WTC11 (cell line): ENCODE measurements at regions of chr1 and their contacts with region 1.

Region 1: DNA sequence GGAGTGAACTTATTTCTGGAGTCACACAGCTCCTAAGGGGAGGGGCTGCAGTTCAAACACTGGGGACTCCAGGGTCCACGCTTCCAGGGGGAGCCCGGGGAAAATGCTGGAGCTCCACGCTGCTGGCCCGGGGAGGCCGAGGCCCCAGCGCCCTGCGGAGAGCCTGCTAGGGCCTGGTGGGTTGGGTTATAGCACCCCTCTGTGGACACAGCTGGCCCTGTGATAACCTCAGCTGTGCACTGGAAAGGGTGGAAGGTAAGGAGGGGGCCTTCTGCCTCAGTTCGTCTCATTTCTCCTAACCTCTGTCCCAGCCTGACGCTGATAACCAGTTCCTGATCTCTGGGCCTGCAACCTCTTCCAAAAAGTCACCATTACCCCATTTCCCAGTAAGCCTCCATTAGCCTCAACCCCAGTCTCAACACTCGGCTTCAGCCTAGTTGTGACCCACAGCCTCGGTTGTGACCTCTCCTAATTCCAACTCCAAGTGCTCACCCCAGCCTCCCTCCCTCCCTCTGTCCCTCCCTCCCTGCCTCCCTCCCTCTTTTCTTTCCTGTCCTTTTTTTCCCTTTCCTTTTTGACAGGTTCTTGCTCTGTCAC is 7.1 kb downstream of the NBL1 start:
- DNase-seq: peak; percentile 68
- ATAC-seq: peak; percentile 34
- H3K4me3 Mint-ChIP-seq: no peak overlapping the region
- H3K27ac Mint-ChIP-seq: no peak overlapping the region
- H3K4me1 Mint-ChIP-seq: peaks cover 13% of the 10 kb centered on the region
- H3K27me3 Mint-ChIP-seq: peaks cover 7% of the 10 kb centered on the region
- CTCF ChIP-seq: 0 out of 2 replicates have a peak, but pooled peaks have one; percentile 16

Region 2: GRCh38 chr1:19273106-19273843 is 378.0 kb before region 1 on chr1:
- CTCF ChIA-PET with region 1: interaction called, 15 read pairs
- POLR2A ChIA-PET with region 1: no interaction called
- DNase-seq: no peak
- ATAC-seq: no peak
- H3K4me3 Mint-ChIP-seq: peak overlapping the region; percentile 18; the same call in 1 of the 2 replicates
- H3K27ac Mint-ChIP-seq: no peak overlapping the region
- H3K4me1 Mint-ChIP-seq: no peaks in the 10 kb centered on the region
- H3K27me3 Mint-ChIP-seq: peaks cover 35% of the 10 kb centered on the region
- CTCF ChIP-seq: no peak

Region 3: GRCh38 chr1:19344372-19345230 is 306.6 kb before region 1 on chr1:
- CTCF ChIA-PET with region 1: interaction called, 10 read pairs
- POLR2A ChIA-PET with region 1: no interaction called
- DNase-seq: peak; percentile 81
- ATAC-seq: peak; percentile 74
- H3K4me3 Mint-ChIP-seq: no peak overlapping the region
- H3K27ac Mint-ChIP-seq: peak overlapping the region; percentile 65
- H3K4me1 Mint-ChIP-seq: peaks cover 14% of the 10 kb centered on the region
- H3K27me3 Mint-ChIP-seq: no peaks in the 10 kb centered on the region
- CTCF ChIP-seq: peak; percentile 94

Region 4: DNA sequence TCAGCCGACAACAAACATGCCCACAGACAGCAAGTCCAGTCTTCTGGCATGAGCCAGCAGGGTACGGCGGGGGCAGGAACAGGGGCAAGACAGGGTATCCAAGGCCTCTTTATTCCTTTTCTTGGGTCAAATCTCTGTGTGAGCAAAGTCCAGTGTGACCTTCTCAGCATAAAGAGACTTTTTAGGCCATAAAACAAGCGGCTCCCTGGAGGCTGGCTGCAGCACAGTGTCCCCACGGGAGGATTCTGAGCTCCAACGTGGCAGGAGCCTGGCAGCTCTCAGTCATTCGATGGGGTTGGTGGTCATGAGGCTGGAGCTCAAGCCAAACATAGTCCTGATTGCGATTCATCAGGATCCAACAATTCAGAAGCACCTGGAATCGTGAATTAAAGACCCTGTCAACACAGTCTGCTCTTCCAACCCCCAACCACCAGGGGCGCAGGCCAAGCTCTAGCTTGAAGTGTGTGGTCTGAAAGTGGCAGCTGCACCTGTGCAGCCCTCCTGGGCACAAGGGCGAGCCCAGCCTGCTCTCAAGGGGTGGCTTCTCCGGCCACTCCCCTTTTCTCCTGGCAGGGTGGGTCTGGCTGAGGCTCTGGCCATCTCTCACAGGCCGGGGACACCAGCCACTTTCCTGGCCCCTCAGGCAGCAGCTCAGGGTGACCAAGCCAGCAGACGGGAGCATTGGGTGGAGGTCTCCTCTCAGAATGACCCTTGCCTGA is 277.0 kb before region 1 on chr1:
- CTCF ChIA-PET with region 1: interaction called, 10 read pairs
- POLR2A ChIA-PET with region 1: no interaction called
- DNase-seq: peak; percentile 79
- ATAC-seq: peak; percentile 90
- H3K4me3 Mint-ChIP-seq: no peak overlapping the region
- H3K27ac Mint-ChIP-seq: no peak overlapping the region
- H3K4me1 Mint-ChIP-seq: no peaks in the 10 kb centered on the region
- H3K27me3 Mint-ChIP-seq: no peaks in the 10 kb centered on the region
- CTCF ChIP-seq: peak; percentile 81

Region 5: DNA sequence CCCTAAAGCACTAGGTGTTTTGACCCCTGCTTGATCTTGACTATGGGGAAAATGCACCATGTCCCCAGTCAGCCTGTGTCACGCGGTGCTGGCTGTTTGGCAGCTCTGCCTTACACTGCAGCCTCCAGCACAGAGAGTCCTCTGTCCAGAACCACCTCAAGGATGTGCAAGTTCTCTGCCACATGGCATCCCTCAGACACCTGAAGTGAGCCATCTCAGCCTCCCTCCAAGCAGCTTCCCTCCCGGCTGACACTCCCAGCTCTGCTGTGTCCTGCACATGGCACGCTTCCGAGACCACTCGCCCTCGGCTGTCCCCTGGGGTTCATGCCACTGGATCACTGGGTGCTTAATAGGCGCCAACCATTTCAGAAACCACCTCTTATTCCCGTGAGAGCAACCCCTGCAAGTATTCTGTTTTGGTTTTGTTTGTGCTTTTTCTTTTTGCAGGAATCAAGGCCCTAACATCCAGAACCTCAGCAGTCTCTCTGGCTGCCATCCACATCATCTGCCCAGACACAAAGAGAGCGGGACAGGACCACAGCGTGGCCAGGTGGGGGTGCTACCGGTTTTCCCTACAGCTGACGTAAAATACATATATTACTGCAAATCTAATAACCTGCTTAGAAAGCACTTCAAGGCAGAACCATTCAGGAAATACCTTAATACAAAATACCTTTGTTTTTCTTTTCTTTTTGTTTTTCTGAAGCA is 211.6 kb before region 1 on chr1:
- CTCF ChIA-PET with region 1: interaction called, 22 read pairs
- POLR2A ChIA-PET with region 1: no interaction called
- DNase-seq: peak; percentile 54
- ATAC-seq: peak; percentile 74
- H3K4me3 Mint-ChIP-seq: no peak overlapping the region
- H3K27ac Mint-ChIP-seq: peak overlapping the region; percentile 70
- H3K4me1 Mint-ChIP-seq: peaks cover 39% of the 10 kb centered on the region
- H3K27me3 Mint-ChIP-seq: no peaks in the 10 kb centered on the region
- CTCF ChIP-seq: no peak

Region 6: GRCh38 chr1:19661721-19662228 is 10.5 kb after region 1 on chr1:
- CTCF ChIA-PET with region 1: interaction called, 25 read pairs
- POLR2A ChIA-PET with region 1: interaction called, 3 read pairs
- DNase-seq: no peak
- ATAC-seq: no peak
- H3K4me3 Mint-ChIP-seq: no peak overlapping the region
- H3K27ac Mint-ChIP-seq: no peak overlapping the region
- H3K4me1 Mint-ChIP-seq: peaks cover 14% of the 10 kb centered on the region
- H3K27me3 Mint-ChIP-seq: peaks cover 38% of the 10 kb centered on the region
- CTCF ChIP-seq: peak; percentile 66